CD8-positive, alpha-beta T cell (primary cell): ENCODE measurements at regions of chrX and their contacts with region 1.

Region 1: GRCh38 chrX:71365876-71366673 is at the start of gene TAF1:
- DNase-seq: peak; percentile 76 to 97 (median 88)
- ATAC-seq: peak; percentile 86
- H3K4me3 ChIP-seq: peak within 1 kb of the TSS; percentile 85 to 95
- H3K4me3 Mint-ChIP-seq: peak within 1 kb of the TSS; percentile 98
- H3K27ac ChIP-seq: peak within 1 kb of the TSS; percentile 87 to 91
- H3K27ac Mint-ChIP-seq: peak within 1 kb of the TSS; percentile 100
- H3K4me1 ChIP-seq: peaks cover 14% of the 10 kb centered on the region
- H3K4me1 Mint-ChIP-seq: peaks cover 28% of the 10 kb centered on the region
- H3K27me3 ChIP-seq: no peaks in the 10 kb centered on the region
- H3K27me3 Mint-ChIP-seq: no peaks in the 10 kb centered on the region
- CTCF ChIP-seq: no peak
- total RNA-seq, gene TAF1: 48.2 to 61.3 TPM

Region 2: DNA sequence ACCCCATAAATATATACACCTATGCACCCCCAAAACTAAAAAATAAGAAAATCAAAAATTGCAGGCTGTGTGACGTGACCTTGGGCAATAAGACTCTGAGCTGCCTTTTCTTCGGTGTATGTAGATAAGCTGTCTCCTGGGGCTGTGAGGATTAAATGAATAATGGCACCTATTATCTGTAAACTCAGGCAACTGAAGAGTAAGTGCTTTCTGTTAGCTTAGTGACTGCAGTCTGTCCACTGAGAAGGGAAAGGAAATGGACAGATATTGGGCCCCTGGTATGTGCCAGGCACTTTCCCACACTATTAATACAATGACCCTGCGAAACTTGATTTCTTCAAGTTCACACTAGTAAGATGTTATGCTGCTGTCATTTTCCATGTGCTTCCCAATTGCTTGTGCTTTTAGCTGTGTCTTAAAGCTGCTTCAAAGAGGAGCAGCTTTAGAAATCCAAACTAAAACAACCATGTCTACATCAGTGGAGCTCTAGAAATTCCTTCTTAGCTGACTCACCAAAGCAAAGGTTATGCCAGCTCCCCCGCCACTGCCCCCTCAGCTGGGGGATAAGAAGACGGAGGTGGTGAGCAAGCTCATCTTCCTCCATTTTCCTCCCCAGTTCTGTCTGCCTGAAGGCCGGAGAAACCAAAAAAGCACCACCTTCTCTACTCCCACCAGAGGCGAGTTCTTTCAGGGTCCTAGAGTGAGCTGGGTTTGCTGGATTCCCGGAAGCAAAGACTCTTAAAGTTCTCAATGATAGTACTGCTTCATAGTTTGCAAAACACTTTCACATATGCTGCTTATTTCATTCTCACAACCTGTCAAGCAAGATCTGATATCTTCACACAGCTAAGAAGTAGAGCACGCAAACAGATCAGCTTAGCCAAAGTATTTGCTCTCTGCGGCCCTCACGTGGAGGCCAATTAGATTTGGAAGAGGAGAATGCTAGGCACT is 1197.6 kb before region 1 on chrX:
- CTCF ChIA-PET with region 1: no interaction called
- POLR2A ChIA-PET with region 1: no interaction called
- intact Hi-C with region 1: no loop called
- DNase-seq: no peak
- ATAC-seq: no peak
- H3K4me3 ChIP-seq: no peak overlapping the region
- H3K4me3 Mint-ChIP-seq: no peak overlapping the region
- H3K27ac ChIP-seq: no peak overlapping the region
- H3K27ac Mint-ChIP-seq: no peak overlapping the region
- H3K4me1 ChIP-seq: no peaks in the 10 kb centered on the region
- H3K4me1 Mint-ChIP-seq: no peaks in the 10 kb centered on the region
- H3K27me3 ChIP-seq: no peaks in the 10 kb centered on the region
- H3K27me3 Mint-ChIP-seq: no peaks in the 10 kb centered on the region
- CTCF ChIP-seq: no peak

Region 3: GRCh38 chrX:71068049-71068763 is 297.9 kb before region 1 on chrX and contains the start of gene SNX12:
- CTCF ChIA-PET with region 1: no interaction called
- POLR2A ChIA-PET with region 1: interaction called, 3 read pairs
- intact Hi-C with region 1: loop called in 1 of 2 experiments (anchors 10 kb)
- DNase-seq: peak; percentile 70 to 95 (median 84)
- ATAC-seq: peak; percentile 92
- H3K4me3 ChIP-seq: peak within 1 kb of the TSS; percentile 76 to 88
- H3K4me3 Mint-ChIP-seq: peak within 1 kb of the TSS; percentile 94
- H3K27ac ChIP-seq: peak within 1 kb of the TSS; percentile 86 to 91
- H3K27ac Mint-ChIP-seq: peak within 1 kb of the TSS; percentile 99
- H3K4me1 ChIP-seq: peaks cover 13% of the 10 kb centered on the region
- H3K4me1 Mint-ChIP-seq: peaks cover 27% of the 10 kb centered on the region
- H3K27me3 ChIP-seq: no peaks in the 10 kb centered on the region
- H3K27me3 Mint-ChIP-seq: no peaks in the 10 kb centered on the region
- CTCF ChIP-seq: no peak
- total RNA-seq, gene SNX12: 23.9 to 27.1 TPM

Region 4: DNA sequence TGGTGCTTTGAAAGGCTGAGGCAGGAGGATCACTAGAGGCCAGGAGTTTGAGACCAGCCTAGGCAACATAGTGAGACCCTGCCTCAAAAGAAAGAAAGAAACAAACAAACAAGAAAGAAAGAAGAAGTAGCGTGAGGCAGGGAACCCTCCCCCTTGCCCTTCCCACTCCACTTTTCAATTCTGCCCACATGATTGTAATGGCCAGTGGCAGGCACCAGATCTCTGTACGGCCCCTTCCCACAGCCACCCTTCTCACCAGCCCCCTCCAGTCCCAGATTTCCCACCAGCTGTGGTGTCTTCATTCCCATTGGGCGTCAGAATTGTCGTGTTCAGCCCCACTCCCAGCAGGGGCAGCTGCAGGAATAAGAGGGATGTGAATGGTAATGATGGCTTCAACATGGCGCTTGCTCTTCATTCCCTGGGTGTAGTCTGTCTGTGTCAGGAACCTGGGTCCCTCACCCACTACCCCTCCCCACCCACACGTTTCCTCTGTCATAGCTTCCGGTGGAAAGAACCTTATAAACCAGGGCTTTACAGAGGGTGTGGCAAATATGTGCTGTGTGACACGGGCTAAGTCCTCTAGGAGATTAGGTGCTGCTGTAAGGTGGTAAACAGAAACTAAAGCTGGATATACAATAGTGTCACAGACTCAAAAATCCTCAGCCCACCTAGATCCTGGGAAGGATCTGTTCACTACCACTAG is 254.8 kb before region 1 on chrX and contains the start of gene IL2RG:
- CTCF ChIA-PET with region 1: no interaction called
- POLR2A ChIA-PET with region 1: interaction called, 3 read pairs
- intact Hi-C with region 1: loop called in 1 of 2 experiments (anchors 5 kb)
- DNase-seq: peak; percentile 53 to 94 (median 76)
- ATAC-seq: peak; percentile 85
- H3K4me3 ChIP-seq: peak within 1 kb of the TSS; percentile 74 to 84
- H3K4me3 Mint-ChIP-seq: peak within 1 kb of the TSS; percentile 98
- H3K27ac ChIP-seq: peak within 1 kb of the TSS; percentile 96 to 100
- H3K27ac Mint-ChIP-seq: peak within 1 kb of the TSS; percentile 99
- H3K4me1 ChIP-seq: peaks cover 41% of the 10 kb centered on the region
- H3K4me1 Mint-ChIP-seq: peaks cover 42% of the 10 kb centered on the region
- H3K27me3 ChIP-seq: no peaks in the 10 kb centered on the region
- H3K27me3 Mint-ChIP-seq: no peaks in the 10 kb centered on the region
- CTCF ChIP-seq: no peak
- total RNA-seq, gene IL2RG: 166 to 197 TPM

Region 5: GRCh38 chrX:71283403-71284143 is 82.5 kb before region 1 on chrX and contains the start of gene NONO:
- CTCF ChIA-PET with region 1: no interaction called
- POLR2A ChIA-PET with region 1: interaction called, 29 read pairs
- intact Hi-C with region 1: loop called (anchors 1 kb)
- DNase-seq: peak; percentile 56 to 98 (median 80)
- ATAC-seq: peak; percentile 85
- H3K4me3 ChIP-seq: peak within 1 kb of the TSS; percentile 65 to 86
- H3K4me3 Mint-ChIP-seq: peak within 1 kb of the TSS; percentile 99
- H3K27ac ChIP-seq: peak within 1 kb of the TSS; percentile 90 to 98
- H3K27ac Mint-ChIP-seq: peak within 1 kb of the TSS; percentile 100
- H3K4me1 ChIP-seq: peaks cover 26% of the 10 kb centered on the region
- H3K4me1 Mint-ChIP-seq: peaks cover 24% of the 10 kb centered on the region
- H3K27me3 ChIP-seq: no peaks in the 10 kb centered on the region
- H3K27me3 Mint-ChIP-seq: no peaks in the 10 kb centered on the region
- CTCF ChIP-seq: no peak
- total RNA-seq, gene NONO: 488 to 500 TPM

Region 6: DNA sequence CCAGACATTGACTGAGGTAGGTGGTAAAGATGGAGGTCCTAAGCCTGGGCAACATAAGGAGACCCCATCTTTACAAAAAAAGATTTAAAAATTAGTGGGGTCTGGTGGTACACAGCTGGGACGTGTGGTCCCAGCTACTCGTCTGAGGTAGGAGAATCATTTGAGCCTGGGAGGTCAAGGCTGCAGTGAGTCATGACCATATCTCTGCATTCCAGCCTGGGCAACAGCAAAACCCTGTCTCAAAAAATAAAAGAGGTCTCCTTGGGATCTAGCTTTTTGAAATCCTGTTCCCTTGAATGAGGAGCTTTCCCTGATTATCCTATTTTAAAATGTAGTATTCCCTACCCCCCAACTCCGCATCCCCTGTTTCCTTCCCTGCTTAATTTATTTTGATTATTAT is 88.1 kb after region 1 on chrX:
- CTCF ChIA-PET with region 1: no interaction called
- POLR2A ChIA-PET with region 1: no interaction called
- intact Hi-C with region 1: no loop called
- DNase-seq: no peak
- ATAC-seq: no peak
- H3K4me3 ChIP-seq: no peak overlapping the region
- H3K4me3 Mint-ChIP-seq: no peak overlapping the region
- H3K27ac ChIP-seq: no peak overlapping the region
- H3K27ac Mint-ChIP-seq: peak overlapping the region; percentile 27
- H3K4me1 ChIP-seq: no peaks in the 10 kb centered on the region
- H3K4me1 Mint-ChIP-seq: no peaks in the 10 kb centered on the region
- H3K27me3 ChIP-seq: no peaks in the 10 kb centered on the region
- H3K27me3 Mint-ChIP-seq: no peaks in the 10 kb centered on the region
- CTCF ChIP-seq: no peak

Region 7: GRCh38 chrX:71482228-71482958 is 116.3 kb after region 1 on chrX:
- CTCF ChIA-PET with region 1: no interaction called
- POLR2A ChIA-PET with region 1: no interaction called
- intact Hi-C with region 1: no loop called
- DNase-seq: no peak
- ATAC-seq: no peak
- H3K4me3 ChIP-seq: no peak overlapping the region
- H3K4me3 Mint-ChIP-seq: no peak overlapping the region
- H3K27ac ChIP-seq: no peak overlapping the region
- H3K27ac Mint-ChIP-seq: no peak overlapping the region
- H3K4me1 ChIP-seq: no peaks in the 10 kb centered on the region
- H3K4me1 Mint-ChIP-seq: no peaks in the 10 kb centered on the region
- H3K27me3 ChIP-seq: no peaks in the 10 kb centered on the region
- H3K27me3 Mint-ChIP-seq: no peaks in the 10 kb centered on the region
- CTCF ChIP-seq: no peak

Region 8: DNA sequence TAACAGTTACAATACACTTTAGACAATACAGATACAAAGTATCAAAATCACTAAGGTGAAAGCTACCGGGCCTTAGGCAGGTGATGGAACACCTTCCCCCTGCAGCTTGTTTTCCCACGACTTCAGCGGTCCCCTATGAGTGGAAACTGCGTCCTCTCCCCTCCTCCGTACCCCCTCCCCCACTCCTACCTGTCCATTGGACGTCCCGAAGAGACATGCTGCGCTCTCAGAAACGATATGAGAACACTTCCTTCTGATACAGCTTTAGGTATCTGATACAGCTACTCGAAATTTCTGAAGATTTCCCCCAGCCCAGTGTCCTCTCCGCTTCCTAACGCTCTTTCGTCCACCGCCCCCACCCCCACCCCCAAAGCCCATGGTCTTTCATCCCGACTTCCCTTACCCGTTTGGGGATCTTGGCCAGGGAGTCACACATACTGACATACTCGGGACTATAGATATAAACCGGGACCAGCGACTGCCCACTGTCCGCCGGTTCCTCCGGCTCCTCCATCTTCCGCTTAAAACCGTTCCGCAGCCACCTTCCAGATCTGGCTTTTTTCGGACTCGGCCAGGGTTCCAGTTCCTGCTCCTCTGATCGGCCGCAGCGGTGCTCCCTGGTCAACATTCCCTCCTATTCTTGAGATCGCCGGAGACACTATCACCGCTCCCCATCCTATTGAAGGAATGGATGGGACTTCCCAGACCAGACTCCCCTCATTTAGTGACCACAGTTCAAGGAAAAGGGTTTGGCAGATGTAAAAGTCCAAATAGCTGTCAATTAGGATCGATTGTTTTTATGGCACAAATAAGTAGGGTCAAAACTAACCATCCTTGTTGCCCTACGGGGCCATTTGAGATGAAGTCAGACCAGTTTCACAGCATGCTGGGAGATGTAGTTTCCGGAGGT is 1206.4 kb after region 1 on chrX and contains the start of gene HDAC8:
- CTCF ChIA-PET with region 1: no interaction called
- POLR2A ChIA-PET with region 1: no interaction called
- intact Hi-C with region 1: loop called in 1 of 2 experiments (anchors 10 kb)
- DNase-seq: peak in 8 of 9 experiments; percentile 10 to 76 (median 46)
- ATAC-seq: peak; percentile 88
- H3K4me3 ChIP-seq: peak within 1 kb of the TSS; percentile 82 to 96
- H3K4me3 Mint-ChIP-seq: peak within 1 kb of the TSS; percentile 96
- H3K27ac ChIP-seq: peak within 1 kb of the TSS; percentile 41 to 69
- H3K27ac Mint-ChIP-seq: peak within 1 kb of the TSS; percentile 88
- H3K4me1 ChIP-seq: no peaks in the 10 kb centered on the region
- H3K4me1 Mint-ChIP-seq: peaks cover 11% of the 10 kb centered on the region
- H3K27me3 ChIP-seq: no peaks in the 10 kb centered on the region
- H3K27me3 Mint-ChIP-seq: no peaks in the 10 kb centered on the region
- CTCF ChIP-seq: no peak
- total RNA-seq, gene HDAC8: 5.7 to 6.8 TPM